ENCODE measurements at regions of chr5 and their contacts with region 1.

Region 1: DNA sequence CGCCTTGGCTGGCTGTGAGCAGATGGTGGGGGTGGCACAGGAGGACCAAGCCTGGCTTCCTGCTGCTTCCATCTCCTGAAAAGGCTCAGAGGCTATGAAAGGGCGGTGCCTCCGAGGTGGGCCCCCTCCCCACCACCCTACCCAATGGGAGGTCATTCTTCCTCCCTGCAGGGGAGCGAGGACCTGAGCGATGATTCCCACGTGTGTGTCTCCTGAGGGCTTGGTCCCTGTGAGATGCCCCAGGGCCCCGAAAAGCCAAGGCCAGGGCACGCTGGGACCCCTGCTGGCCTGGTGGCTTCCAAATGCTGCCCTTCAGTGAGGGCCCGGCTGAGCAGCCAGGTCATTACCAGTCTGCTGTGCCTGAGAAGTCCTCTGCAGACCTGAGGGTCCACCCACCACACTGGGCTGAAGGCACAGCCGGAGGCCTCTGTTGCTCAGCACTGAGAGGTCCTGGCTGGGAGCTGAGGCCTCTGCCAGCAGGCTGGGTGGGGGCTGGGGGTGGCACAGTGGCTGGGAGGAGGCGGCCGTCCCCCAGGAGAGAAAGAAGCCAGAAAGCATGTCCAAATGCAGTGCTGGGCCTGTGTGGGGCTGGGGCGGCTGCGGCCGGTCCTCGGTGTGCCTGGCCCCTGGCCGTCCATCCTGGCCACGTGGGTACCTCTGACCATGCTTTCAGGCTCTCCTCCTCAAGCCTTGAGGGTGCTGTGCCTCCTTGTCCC is 14.0 kb upstream of the SLC6A19 start:
- DNase-seq: no peak

Region 2: DNA sequence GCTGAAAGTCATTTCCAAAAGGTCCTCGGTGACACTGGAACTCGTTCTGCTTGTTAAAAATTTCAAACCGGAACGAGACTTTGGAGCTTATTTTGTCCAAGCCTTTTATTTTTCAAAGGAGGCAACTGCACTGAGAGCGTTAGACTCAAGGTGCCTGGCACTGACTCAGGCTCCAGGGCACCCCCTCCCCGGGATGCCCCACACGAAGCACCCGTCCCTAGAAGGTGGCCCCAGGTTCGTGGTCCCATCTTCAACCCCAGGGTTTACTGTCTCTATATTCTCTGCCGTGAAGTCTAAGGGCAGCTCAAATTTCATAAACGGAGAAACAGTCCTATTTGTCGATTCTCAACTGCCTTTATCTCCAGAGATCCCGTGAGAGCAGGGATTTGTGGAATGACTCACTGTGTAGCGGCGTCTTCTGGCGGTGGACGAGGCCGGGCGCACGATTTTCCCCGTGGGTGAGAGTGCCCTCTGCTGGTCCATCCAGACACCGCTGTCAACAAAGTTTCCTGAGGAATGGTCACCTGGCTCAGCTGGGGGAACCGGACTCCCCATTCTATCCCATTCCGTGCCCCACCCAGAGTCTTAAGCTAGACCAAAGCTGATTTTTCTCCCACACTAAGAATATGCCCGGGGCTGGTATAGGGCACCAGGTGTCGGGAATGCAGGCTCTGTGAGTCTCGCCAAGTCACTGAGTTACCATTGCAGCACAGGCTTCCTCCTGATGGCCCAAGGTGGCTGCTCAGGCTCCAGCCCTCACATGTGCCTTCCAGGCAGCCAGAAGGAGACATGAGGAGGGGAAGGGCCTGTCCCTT is 13.1 kb before region 1 on chr5:
- CTCF ChIA-PET with region 1: interaction called, 10 read pairs
- POLR2A ChIA-PET with region 1: interaction called, 3 read pairs
- DNase-seq: peak; percentile 83